Activated naive CD4-positive, alpha-beta T cell treated with anti-CD3 and anti-CD28 coated beads for 36 hours (primary cell): ENCODE measurements at regions of chr5 and their contacts with region 1.

Region 1: DNA sequence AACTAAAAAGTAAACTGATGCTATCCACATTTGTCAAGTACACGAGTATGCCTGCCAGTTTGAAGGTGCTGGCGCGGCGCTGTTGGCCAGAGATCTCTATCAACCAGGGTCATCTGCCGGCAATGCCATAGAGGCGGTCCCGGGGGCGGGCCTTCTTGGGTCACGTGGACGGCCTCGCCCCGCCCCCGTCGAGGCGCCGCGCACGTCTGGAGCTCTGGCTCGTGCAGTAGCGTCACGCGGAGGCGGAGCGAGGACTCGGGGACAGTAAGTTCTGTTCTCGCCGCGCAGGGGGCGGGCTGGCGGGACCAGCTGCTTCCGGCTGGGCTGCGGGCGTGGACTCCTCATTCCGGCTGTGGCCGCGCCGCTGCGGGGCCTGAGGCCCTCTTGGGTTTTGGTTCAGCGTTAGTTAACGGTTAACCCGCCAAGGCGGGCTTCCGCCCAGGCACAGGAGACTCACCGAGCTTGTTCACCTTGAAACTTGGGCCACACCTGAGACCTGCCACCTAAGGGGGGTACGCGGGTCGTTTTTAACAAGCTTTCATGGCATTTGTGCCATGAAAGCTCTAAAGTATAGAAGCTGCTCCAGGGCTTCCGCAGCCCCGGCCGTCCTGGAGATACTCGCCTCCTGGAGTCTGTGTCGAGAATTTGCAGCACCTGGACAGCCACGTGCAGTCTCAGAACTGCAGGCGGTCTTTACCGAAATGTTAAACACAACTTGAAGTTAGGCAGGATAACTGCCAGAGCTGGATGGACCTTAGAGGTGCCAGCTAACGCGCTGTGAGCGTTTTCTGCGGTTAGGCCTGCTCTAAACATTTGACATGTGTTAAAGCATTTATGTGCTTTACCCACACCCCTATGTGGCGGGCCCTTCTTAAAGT is at the start of gene RFESD:
- DNase-seq: peak; percentile 96
- H3K4me3 Mint-ChIP-seq: peak within 1 kb of the TSS; percentile 82
- H3K27ac Mint-ChIP-seq: peak within 1 kb of the TSS; percentile 83
- H3K4me1 Mint-ChIP-seq: peaks cover 34% of the 10 kb centered on the region
- H3K27me3 Mint-ChIP-seq: no peaks in the 10 kb centered on the region
- total RNA-seq, gene RFESD: 9.1 to 9.7 TPM

Region 2: DNA sequence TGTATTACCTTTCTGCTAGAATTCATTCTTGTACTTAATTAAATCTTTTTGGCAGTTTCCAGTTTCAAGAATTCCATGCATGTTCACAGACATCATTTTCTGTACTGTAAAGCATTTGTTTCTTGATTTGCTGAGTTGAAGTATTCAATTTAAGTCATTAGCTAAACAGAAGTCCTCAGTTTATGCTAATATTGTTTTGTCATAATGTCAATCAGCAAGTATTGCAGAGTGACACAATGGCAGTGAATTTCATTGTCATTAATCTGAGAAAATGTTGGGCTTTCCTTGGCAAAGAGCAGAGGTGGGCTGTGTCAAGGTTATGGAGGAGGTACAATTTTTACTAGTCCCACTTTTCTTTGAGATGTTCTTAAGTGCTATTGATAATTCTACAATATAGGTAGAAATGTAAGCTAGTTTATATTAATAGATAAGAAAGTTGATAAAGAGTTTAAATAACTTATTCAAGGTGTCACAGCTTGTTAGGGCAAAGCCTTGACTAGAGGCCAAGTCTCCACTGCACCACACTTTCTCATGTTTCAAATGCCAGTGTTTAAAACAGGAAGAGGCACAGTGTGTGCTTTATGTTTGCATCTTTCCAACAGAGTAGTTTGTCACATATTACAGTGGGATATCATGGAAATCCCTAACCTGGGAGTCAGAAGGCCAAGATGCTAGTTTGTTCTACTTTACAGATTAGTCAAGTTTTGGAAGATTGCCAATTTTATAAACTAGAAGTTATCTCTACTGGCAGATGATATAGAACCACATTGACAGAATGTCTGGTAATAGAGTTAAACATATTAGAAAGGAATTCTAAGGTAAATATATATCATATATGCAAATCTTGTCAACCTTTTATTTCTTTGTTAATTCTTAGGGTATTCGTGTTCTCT is 972.1 kb before region 1 on chr5:
- CTCF ChIA-PET with region 1: no interaction called
- intact Hi-C with region 1: no loop called
- DNase-seq: no peak
- H3K4me3 Mint-ChIP-seq: no peak overlapping the region
- H3K27ac Mint-ChIP-seq: no peak overlapping the region
- H3K4me1 Mint-ChIP-seq: no peaks in the 10 kb centered on the region
- H3K27me3 Mint-ChIP-seq: no peaks in the 10 kb centered on the region

Region 3: DNA sequence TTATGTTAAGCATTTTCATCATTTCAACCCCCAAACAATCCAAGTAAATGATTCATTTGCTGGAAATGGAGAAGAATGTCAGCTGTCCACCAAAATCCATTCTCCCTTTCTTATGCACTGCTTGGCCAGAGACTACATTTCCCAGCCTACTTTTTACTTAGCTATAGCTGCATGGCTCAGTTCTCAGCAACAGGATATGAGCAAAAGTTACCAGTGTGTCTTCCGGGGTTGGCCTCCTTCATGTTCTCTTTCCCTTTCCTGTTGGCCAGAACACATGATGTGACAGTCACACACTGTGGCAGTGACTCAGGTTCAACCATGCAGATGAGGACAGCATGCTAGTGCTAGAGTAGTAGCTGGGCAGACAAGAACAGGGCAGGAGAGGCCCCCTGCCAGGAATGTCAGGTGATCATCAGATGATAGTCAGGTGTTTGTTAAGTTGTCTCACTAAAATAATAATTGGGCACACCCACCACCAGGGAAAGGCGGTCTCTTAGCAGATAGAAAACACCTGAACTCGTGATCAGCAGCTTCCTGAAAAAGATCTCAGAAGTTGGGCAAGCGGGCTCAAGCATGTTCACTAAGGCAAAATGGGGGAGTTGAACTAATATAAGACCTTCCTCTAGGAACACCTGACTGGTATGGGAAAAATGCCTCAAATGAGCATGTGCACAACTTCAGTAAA is 14.7 kb before region 1 on chr5:
- CTCF ChIA-PET with region 1: interaction called, 27 read pairs
- intact Hi-C with region 1: loop called (anchors 1 kb)
- DNase-seq: peak; percentile 89
- H3K4me3 Mint-ChIP-seq: peak overlapping the region; percentile 53
- H3K27ac Mint-ChIP-seq: peak overlapping the region; percentile 94
- H3K4me1 Mint-ChIP-seq: peaks cover 20% of the 10 kb centered on the region
- H3K27me3 Mint-ChIP-seq: no peaks in the 10 kb centered on the region

Region 4: GRCh38 chr5:95760273-95761191 is 113.7 kb after region 1 on chr5:
- CTCF ChIA-PET with region 1: interaction called, 4 read pairs
- intact Hi-C with region 1: loop called (anchors 1 kb)
- DNase-seq: peak; percentile 48
- H3K4me3 Mint-ChIP-seq: peak overlapping the region; percentile 36
- H3K27ac Mint-ChIP-seq: peak overlapping the region; percentile 47
- H3K4me1 Mint-ChIP-seq: peaks cover 26% of the 10 kb centered on the region
- H3K27me3 Mint-ChIP-seq: no peaks in the 10 kb centered on the region

Region 5: GRCh38 chr5:95835682-95836385 is 189.0 kb after region 1 on chr5:
- CTCF ChIA-PET with region 1: interaction called, 4 read pairs
- intact Hi-C with region 1: loop called (anchors 1 kb)
- DNase-seq: peak; percentile 57
- H3K4me3 Mint-ChIP-seq: peak overlapping the region; percentile 77
- H3K27ac Mint-ChIP-seq: peak overlapping the region; percentile 92
- H3K4me1 Mint-ChIP-seq: peaks cover 47% of the 10 kb centered on the region
- H3K27me3 Mint-ChIP-seq: no peaks in the 10 kb centered on the region

Region 6: GRCh38 chr5:96079075-96079474 is 432.3 kb after region 1 on chr5:
- CTCF ChIA-PET with region 1: no interaction called
- intact Hi-C with region 1: loop called (anchors 10 kb)
- DNase-seq: peak; percentile 71
- H3K4me3 Mint-ChIP-seq: no peak overlapping the region
- H3K27ac Mint-ChIP-seq: peak overlapping the region; percentile 77
- H3K4me1 Mint-ChIP-seq: peaks cover 38% of the 10 kb centered on the region
- H3K27me3 Mint-ChIP-seq: peaks cover 9% of the 10 kb centered on the region

Region 7: GRCh38 chr5:96662725-96663513 is 1016.1 kb after region 1 on chr5:
- CTCF ChIA-PET with region 1: no interaction called
- intact Hi-C with region 1: loop called (anchors 5 kb)
- DNase-seq: peak; percentile 89
- H3K4me3 Mint-ChIP-seq: peak overlapping the region; percentile 96
- H3K27ac Mint-ChIP-seq: peak overlapping the region; percentile 96
- H3K4me1 Mint-ChIP-seq: peaks cover 22% of the 10 kb centered on the region
- H3K27me3 Mint-ChIP-seq: peaks cover 3% of the 10 kb centered on the region